ENCODE measurements at regions of chr17 and their contacts with region 1.

Region 1: GRCh38 chr17:16415031-16415924 is at the start of gene TRPV2:
- DNase-seq: peak; percentile 52
- H3K4me3 ChIP-seq: peak within 1 kb of the TSS; percentile 52
- H3K27ac ChIP-seq: peak within 1 kb of the TSS; percentile 84
- H3K4me1 ChIP-seq: peaks cover 5% of the 10 kb centered on the region
- H3K27me3 ChIP-seq: no peaks in the 10 kb centered on the region
- CTCF ChIP-seq: peak; percentile 36
- total RNA-seq, gene TRPV2: 5.4 to 7.4 TPM

Region 2: DNA sequence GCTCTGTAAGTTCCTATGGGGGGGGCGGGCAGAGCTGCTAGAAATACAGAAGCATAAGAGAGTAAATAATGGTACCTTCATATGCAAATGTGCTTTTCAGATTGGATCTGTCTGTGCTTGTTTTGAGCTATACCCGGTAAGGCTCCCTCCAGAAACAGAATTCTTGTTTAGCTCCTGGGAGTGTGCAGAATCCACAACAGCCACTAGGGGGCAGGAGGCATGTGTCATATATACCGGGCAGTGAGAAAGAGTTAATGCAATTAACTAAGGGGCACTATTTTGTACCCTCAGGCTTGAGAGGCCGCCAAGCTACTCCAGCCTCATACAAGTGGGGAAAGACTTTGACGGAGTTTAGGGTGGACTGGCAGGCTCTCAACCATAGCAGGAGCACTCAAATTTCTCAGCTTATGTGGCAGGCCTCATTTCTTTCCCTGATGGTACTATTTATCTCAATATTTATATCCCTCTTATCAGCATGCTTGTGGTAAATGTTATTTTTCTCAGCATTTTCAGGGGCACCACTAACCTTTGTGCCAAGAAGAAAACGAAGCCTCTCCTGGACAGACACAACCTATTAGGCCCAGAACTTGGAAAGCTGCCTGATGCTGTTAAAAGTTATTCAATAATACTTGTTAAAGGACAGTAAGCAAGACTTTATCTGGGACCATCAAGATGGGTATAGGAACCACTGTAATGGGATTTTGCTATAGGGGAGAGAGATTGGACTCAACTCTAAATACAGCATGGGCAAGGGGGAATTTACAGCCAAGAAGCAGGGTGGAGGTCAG is 51.3 kb before region 1 on chr17:
- intact Hi-C with region 1: loop called (anchors 10 kb)
- DNase-seq: peak; percentile 85
- H3K4me3 ChIP-seq: no peak overlapping the region
- H3K27ac ChIP-seq: no peak overlapping the region
- H3K4me1 ChIP-seq: no peaks in the 10 kb centered on the region
- H3K27me3 ChIP-seq: no peaks in the 10 kb centered on the region
- CTCF ChIP-seq: peak; percentile 90